ENCODE measurements at regions of chr1 and their contacts with region 1.

Region 1: GRCh38 chr1:241895013-241895412 is 47.0 kb downstream of the EXO1 start:
- DNase-seq: no peak
- ATAC-seq: no peak
- H3K4me3 ChIP-seq: no peak overlapping the region
- H3K27ac ChIP-seq: no peak overlapping the region
- H3K4me1 ChIP-seq: no peaks in the 10 kb centered on the region
- H3K27me3 ChIP-seq: no peaks in the 10 kb centered on the region
- CTCF ChIP-seq: no peak
- POLR2A ChIP-seq: no peak

Region 2: GRCh38 chr1:241675983-241676382 is 219.0 kb before region 1 on chr1:
- intact Hi-C with region 1: no loop called
- DNase-seq: no peak
- ATAC-seq: no peak
- H3K4me3 ChIP-seq: no peak overlapping the region
- H3K27ac ChIP-seq: no peak overlapping the region
- H3K4me1 ChIP-seq: no peaks in the 10 kb centered on the region
- H3K27me3 ChIP-seq: peaks cover 0 to 5% (median 0%) of the 10 kb centered on the region in 9 donors
- CTCF ChIP-seq: no peak
- POLR2A ChIP-seq: no peak

Region 3: DNA sequence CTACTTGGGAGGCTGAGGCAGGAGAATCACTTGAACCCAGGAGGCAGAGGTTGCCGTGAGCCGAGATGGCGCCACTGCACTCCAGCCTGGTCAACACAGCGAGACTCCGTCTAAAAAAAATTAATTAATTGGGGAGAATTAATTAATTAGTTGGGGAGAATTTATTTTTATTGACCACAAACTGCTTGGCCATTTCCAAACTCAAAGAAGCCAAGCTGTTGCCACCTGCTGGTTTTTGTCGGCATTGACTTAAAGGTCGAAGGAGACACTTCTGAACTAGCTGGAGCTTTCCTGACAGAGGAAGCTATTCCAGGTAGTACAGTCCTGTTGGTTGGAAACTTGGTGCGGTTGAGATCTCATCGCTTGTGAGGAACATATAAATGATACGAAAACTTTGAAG is 90.8 kb after region 1 on chr1:
- intact Hi-C with region 1: loop called in 7 of 10 experiments (anchors 2 to 10 kb)
- DNase-seq: no peak
- ATAC-seq: no peak
- H3K4me3 ChIP-seq: no peak overlapping the region
- H3K27ac ChIP-seq: no peak overlapping the region
- H3K4me1 ChIP-seq: no peaks in the 10 kb centered on the region
- H3K27me3 ChIP-seq: no peaks in the 10 kb centered on the region
- CTCF ChIP-seq: peak in 10 of 12 donors; percentile 14 to 56 (median 34)
- POLR2A ChIP-seq: no peak

Region 4: GRCh38 chr1:241998412-241998921 is 103.5 kb after region 1 on chr1:
- intact Hi-C with region 1: loop called in 7 of 10 experiments (anchors 5 to 10 kb)
- DNase-seq: peak; percentile 67 to 83 (median 74)
- ATAC-seq: peak; percentile 43 to 93 (median 84)
- H3K4me3 ChIP-seq: peak overlapping the region in 10 of 12 donors; percentile 7 to 53 (median 35)
- H3K27ac ChIP-seq: peak overlapping the region in 6 of 12 donors; percentile 17 to 54 (median 46)
- H3K4me1 ChIP-seq: peaks cover 0 to 10% (median 0%) of the 10 kb centered on the region in 12 donors
- H3K27me3 ChIP-seq: no peaks in the 10 kb centered on the region
- CTCF ChIP-seq: peak; percentile 35 to 80 (median 61)
- POLR2A ChIP-seq: no peak

Region 5: GRCh38 chr1:242005866-242006565 is 111.0 kb after region 1 on chr1:
- intact Hi-C with region 1: loop called in 2 of 10 experiments (anchors 10 kb)
- DNase-seq: no peak
- ATAC-seq: no peak
- H3K4me3 ChIP-seq: no peak overlapping the region
- H3K27ac ChIP-seq: no peak overlapping the region
- H3K4me1 ChIP-seq: no peaks in the 10 kb centered on the region
- H3K27me3 ChIP-seq: no peaks in the 10 kb centered on the region
- CTCF ChIP-seq: no peak
- POLR2A ChIP-seq: no peak

Region 6: GRCh38 chr1:242017584-242018233 is 122.7 kb after region 1 on chr1:
- intact Hi-C with region 1: loop called in 3 of 10 experiments (anchors 5 to 10 kb)
- DNase-seq: peak in 2 of 5 donors; percentile 22 to 24
- ATAC-seq: peak in 1 of 4 donors; percentile 59
- H3K4me3 ChIP-seq: no peak overlapping the region
- H3K27ac ChIP-seq: no peak overlapping the region
- H3K4me1 ChIP-seq: no peaks in the 10 kb centered on the region
- H3K27me3 ChIP-seq: no peaks in the 10 kb centered on the region
- CTCF ChIP-seq: peak; percentile 45 to 72 (median 60)
- POLR2A ChIP-seq: no peak

Measured in heart left ventricle (tissue), 16 donors.